HCT116 (cell line): ENCODE measurements at regions of chr17 and their contacts with region 1.

Region 1: GRCh38 chr17:37570527-37571093 is 38.6 kb downstream of the SYNRG start:
- DNase-seq: peak; percentile 34
- ATAC-seq: peak; percentile 99
- H3K4me3 ChIP-seq: no peak overlapping the region
- H3K27ac ChIP-seq: no peak overlapping the region
- H3K4me1 ChIP-seq: peaks cover 0 to 6% of the 10 kb centered on the region in 2 experiments; a peak in 1 of 4 replicates
- H3K27me3 ChIP-seq: no peaks in the 10 kb centered on the region
- CTCF ChIP-seq: peak; percentile 57 to 81 (median 75); a peak in 5 of 6 replicates
- POLR2A ChIP-seq: no peak
- RAD21 ChIP-seq: peak; percentile 76

Region 2: GRCh38 chr17:37239690-37240334 is 330.8 kb before region 1 on chr17:
- CTCF ChIA-PET with region 1: no interaction called
- POLR2A ChIA-PET with region 1: no interaction called
- RAD21 ChIA-PET with region 1: no interaction called
- intact Hi-C with region 1: loop called (anchors 10 kb)
- DNase-seq: peak; percentile 3
- ATAC-seq: no peak
- H3K4me3 ChIP-seq: no peak overlapping the region
- H3K27ac ChIP-seq: no peak overlapping the region
- H3K4me1 ChIP-seq: no peaks in the 10 kb centered on the region
- H3K27me3 ChIP-seq: no peaks in the 10 kb centered on the region
- CTCF ChIP-seq: peak; percentile 56 to 71 (median 59); a peak in 5 of 6 replicates
- POLR2A ChIP-seq: no peak
- RAD21 ChIP-seq: peak; percentile 68

Region 3: DNA sequence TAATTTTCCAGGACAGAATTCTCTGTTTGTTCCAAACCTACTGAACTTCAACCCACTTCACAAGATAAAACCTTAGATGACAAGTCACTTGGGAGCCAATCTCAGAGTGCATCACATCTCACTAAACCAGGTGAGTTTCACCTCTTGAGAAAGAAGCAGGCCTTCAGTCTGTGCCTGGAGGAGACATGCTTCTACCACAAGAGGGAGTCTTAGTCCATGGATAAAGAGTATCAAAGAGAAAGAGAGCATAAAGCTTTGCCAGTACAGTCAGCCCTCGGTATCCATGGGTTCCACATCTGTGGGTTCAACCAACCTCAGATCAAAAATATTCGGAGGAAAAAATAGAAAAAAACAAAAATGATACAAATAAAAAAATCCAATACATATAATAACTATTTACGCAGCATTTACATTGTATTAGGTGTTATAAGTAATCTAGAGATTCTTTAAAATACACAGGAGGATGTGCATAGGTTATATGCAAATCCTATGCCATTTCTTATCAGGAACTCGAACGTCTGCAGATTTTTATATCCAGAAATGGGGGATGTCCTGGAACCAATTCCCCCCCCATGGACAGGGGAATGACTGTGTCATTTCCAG is 43.3 kb before region 1 on chr17:
- CTCF ChIA-PET with region 1: interaction called, 19 read pairs
- POLR2A ChIA-PET with region 1: no interaction called
- RAD21 ChIA-PET with region 1: no interaction called
- intact Hi-C with region 1: loop called (anchors 1 kb)
- DNase-seq: peak; percentile 38
- ATAC-seq: peak; percentile 96
- H3K4me3 ChIP-seq: no peak overlapping the region
- H3K27ac ChIP-seq: no peak overlapping the region
- H3K4me1 ChIP-seq: no peaks in the 10 kb centered on the region
- H3K27me3 ChIP-seq: no peaks in the 10 kb centered on the region
- CTCF ChIP-seq: peak; percentile 66 to 83 (median 82); a peak in 5 of 6 replicates
- POLR2A ChIP-seq: no peak
- RAD21 ChIP-seq: peak; percentile 82

Region 4: GRCh38 chr17:37888881-37889280 is 318.3 kb after region 1 on chr17:
- CTCF ChIA-PET with region 1: no interaction called
- POLR2A ChIA-PET with region 1: no interaction called
- RAD21 ChIA-PET with region 1: no interaction called
- intact Hi-C with region 1: no loop called
- DNase-seq: no peak
- ATAC-seq: no peak
- H3K4me3 ChIP-seq: no peak overlapping the region
- H3K27ac ChIP-seq: no peak overlapping the region
- H3K4me1 ChIP-seq: no peaks in the 10 kb centered on the region
- H3K27me3 ChIP-seq: no peaks in the 10 kb centered on the region
- CTCF ChIP-seq: no peak
- POLR2A ChIP-seq: no peak
- RAD21 ChIP-seq: no peak